PC-9 (cell line): ENCODE measurements at regions of chr6 and their contacts with region 1.

Region 1: DNA sequence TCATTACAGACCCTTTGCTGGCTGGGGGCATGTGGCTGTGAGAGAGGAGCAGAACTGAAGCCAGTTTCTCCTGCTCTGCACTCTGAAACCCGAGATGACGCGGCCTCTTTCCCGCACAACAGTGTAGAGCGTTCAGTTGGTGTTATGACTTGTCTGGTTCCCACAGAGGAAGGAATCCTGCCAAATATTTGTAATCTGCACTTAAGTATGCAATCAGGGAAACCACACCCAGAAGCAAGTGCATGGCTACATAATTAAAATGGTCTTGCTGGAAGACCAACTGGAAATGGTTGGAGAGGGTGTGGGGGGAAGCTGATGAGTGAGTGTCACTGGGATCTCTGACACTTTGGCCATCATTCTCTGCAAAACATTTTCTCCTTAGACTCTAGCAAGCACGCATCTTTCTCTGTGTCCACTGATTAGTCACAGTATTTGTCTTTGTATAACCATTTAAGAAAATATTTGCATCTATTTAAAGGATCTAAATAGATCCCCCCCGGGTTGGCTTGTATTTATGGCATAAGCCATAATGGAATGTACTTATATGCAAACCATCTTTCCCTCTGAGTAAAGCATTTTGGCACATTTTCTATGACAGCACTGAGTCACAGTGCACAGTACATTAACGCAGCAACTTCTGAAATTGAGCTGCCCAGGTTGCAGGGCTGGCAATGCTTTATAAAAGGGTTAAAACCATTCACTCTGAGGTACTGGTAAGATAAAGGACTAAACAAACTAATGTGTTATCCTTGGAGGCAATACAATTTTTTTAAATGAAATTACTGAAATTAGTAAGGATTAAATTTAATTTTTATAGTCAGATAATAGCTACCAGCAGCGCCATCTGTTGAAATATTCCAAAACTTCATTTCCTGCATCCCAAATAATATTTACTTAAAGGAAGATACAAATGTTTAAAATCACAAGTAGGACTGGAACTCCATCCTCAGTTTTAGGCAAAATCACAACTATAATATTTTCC is 76.7 kb downstream of the FOXC1 start:
- DNase-seq: peak; percentile 70 to 90
- H3K4me3 ChIP-seq: no peak overlapping the region
- H3K27ac ChIP-seq: peak overlapping the region; percentile 58
- H3K4me1 ChIP-seq: peaks cover 45% of the 10 kb centered on the region
- H3K27me3 ChIP-seq: no peaks in the 10 kb centered on the region
- CTCF ChIP-seq: peak; percentile 61

Region 2: DNA sequence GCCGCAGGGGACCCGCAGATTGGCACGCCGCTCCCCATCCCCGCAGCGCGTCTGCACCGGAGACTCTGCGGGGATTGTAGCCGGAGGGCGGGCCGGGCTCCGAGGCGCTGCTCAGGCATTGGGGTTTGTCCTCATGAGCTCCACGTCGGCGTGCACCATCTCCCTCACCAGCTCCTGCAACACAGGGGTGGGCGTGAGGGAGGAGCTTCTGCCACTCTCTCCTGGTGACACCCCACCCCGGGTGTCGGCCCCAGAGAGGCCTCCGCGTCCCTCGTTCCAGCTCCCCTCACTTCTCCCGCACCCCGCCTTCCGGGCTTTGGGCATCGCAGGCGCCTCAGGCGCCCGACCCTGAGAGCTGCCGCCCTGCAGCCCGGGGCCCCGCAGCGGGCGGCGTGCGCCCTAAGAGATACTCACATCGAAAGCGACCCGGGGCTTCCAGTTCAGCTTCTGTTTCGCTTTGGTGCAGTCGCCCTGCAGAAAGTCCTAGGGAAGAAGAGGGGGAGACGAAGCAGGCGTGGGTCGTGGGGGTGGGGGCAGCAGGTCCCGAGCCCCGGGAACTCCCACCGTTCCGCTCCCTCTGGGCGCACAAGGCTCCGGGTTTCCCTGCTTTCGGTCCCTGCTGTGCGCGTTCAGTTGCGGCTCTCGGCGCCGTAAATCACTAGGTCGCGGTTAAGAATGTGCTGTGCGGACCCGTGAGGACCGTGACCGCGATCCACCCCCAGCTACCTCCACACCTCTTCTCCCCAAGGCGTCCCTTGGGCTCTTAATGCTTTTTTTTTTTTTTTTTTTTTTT is 62.2 kb before region 1 on chr6:
- CTCF ChIA-PET with region 1: no interaction called
- POLR2A ChIA-PET with region 1: interaction called, 13 read pairs
- intact Hi-C with region 1: no loop called
- DNase-seq: no peak
- H3K4me3 ChIP-seq: peak overlapping the region; percentile 50; the same call in 1 of the 2 replicates
- H3K27ac ChIP-seq: no peak overlapping the region
- H3K4me1 ChIP-seq: 0 out of 2 replicates have a peak, but pooled peaks cover 2% of the 10 kb centered on the region
- H3K27me3 ChIP-seq: no peaks in the 10 kb centered on the region
- CTCF ChIP-seq: no peak

Region 3: DNA sequence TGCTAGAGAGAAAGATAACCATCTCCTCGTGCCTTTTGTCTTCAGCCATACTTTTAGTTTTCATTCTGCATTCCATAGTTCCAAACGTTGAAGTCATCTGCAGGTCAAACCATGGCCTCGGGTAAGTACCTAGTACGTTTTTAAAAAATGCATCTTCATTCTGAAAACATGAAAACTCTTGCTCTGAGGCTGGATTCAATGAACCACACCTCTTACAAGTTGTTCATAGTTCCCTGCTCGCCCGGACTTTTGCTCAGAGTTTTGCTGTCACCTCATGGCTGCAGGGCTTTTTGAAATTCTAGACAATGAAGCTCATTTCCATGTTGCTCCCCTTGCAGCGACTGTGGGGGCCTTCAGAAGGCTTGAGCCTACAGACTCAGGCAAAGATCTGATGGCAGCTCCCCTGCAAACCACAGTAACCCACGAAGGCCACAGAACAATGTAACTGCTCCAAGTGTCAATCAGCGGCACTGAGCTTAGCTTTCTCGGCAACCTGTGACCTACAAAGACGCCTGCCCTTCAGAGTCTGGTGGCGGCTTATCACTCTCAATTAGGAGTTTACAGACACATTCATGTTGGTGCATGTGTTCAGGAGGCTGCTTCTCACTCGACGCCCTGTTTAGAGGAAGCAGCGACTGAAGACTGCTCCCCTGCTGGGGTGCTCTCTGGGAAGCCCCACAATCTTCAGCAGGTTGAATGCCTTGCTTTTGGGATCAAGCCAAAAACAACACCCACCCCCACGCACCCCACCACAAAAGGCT is 15.5 kb before region 1 on chr6:
- CTCF ChIA-PET with region 1: no interaction called
- POLR2A ChIA-PET with region 1: no interaction called
- intact Hi-C with region 1: loop called (anchors 1 kb)
- DNase-seq: peak; percentile 69 to 88
- H3K4me3 ChIP-seq: no peak overlapping the region
- H3K27ac ChIP-seq: peak overlapping the region; percentile 73
- H3K4me1 ChIP-seq: peaks cover 16% of the 10 kb centered on the region
- H3K27me3 ChIP-seq: no peaks in the 10 kb centered on the region
- CTCF ChIP-seq: no peak

Region 4: DNA sequence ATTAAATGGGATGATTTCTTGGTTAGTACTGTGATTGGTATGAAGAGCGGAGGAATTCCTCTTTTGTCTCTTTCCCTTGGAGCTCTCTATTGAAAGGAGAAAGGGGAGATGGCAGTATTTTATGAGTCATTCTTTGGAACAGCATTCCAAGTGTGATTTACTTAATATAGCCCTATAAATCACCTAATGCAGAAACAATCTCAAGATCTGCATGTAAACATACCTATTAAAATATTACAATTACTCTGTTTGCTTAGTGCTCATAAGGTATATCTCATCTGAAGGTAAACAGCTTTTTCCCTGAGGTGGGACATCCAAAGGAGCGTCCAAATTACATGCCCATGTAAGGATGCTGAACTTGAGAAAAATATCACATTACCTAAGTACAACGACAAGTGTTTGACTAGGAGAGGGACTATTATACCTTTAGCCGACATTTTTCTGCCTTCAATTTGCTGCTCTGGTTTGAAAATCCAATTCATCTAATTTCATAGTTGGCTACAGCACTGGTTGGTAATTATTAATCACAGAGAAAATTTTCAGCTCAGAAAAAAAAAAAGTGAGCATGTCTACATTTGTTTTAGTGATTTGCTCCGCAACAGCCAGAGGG is 152.3 kb after region 1 on chr6:
- CTCF ChIA-PET with region 1: no interaction called
- POLR2A ChIA-PET with region 1: no interaction called
- intact Hi-C with region 1: loop called (anchors 1 kb)
- DNase-seq: peak in 1 of 2 experiments; percentile 84
- H3K4me3 ChIP-seq: no peak overlapping the region
- H3K27ac ChIP-seq: 0 out of 2 replicates have a peak overlapping the region, but pooled peaks have one; percentile 24
- H3K4me1 ChIP-seq: peaks cover 17% of the 10 kb centered on the region
- H3K27me3 ChIP-seq: no peaks in the 10 kb centered on the region
- CTCF ChIP-seq: no peak